ENCODE measurements at regions of chr22 and their contacts with region 1.

Region 1: GRCh38 chr22:20885557-20886323 is 26.9 kb downstream of the SNAP29 start:
- DNase-seq: peak; percentile 80 to 85
- H3K4me3 ChIP-seq: no peak overlapping the region
- H3K27ac ChIP-seq: 0 out of 2 replicates have a peak overlapping the region, but pooled peaks have one; percentile 42
- H3K4me1 ChIP-seq: peaks cover 28% of the 10 kb centered on the region
- H3K27me3 ChIP-seq: no peaks in the 10 kb centered on the region
- CTCF ChIP-seq: peak; percentile 82

Region 2: GRCh38 chr22:20803696-20804324 is 81.9 kb before region 1 on chr22:
- CTCF ChIA-PET with region 1: interaction called, 4 read pairs
- POLR2A ChIA-PET with region 1: no interaction called
- intact Hi-C with region 1: loop called (anchors 5 kb)
- DNase-seq: peak in 1 of 2 experiments; percentile 34
- H3K4me3 ChIP-seq: no peak overlapping the region
- H3K27ac ChIP-seq: no peak overlapping the region
- H3K4me1 ChIP-seq: peaks cover 34% of the 10 kb centered on the region
- H3K27me3 ChIP-seq: no peaks in the 10 kb centered on the region
- CTCF ChIP-seq: peak; percentile 67

Region 3: DNA sequence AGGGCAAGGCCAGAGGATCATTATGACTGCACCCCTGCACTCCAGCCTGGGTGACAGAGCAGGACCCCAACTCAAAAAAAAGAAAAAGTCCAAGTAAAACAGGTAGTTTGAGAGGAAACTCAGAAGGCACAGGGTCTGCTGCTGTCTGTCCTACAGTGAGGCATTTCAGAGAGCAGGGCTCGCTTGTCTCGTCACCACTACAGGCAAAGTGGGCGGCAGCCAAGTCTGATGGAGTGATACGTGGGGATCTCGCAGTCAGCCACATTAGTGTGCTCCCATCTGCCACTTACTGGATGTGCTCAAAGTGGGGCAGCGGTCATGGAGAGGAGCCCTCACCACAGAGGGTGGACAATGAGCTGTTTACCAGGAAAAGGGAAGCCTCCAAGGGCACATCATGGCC is 69.2 kb before region 1 on chr22:
- CTCF ChIA-PET with region 1: no interaction called
- POLR2A ChIA-PET with region 1: no interaction called
- intact Hi-C with region 1: no loop called
- DNase-seq: no peak
- H3K4me3 ChIP-seq: no peak overlapping the region
- H3K27ac ChIP-seq: no peak overlapping the region
- H3K4me1 ChIP-seq: no peaks in the 10 kb centered on the region
- H3K27me3 ChIP-seq: no peaks in the 10 kb centered on the region
- CTCF ChIP-seq: no peak

Region 4: DNA sequence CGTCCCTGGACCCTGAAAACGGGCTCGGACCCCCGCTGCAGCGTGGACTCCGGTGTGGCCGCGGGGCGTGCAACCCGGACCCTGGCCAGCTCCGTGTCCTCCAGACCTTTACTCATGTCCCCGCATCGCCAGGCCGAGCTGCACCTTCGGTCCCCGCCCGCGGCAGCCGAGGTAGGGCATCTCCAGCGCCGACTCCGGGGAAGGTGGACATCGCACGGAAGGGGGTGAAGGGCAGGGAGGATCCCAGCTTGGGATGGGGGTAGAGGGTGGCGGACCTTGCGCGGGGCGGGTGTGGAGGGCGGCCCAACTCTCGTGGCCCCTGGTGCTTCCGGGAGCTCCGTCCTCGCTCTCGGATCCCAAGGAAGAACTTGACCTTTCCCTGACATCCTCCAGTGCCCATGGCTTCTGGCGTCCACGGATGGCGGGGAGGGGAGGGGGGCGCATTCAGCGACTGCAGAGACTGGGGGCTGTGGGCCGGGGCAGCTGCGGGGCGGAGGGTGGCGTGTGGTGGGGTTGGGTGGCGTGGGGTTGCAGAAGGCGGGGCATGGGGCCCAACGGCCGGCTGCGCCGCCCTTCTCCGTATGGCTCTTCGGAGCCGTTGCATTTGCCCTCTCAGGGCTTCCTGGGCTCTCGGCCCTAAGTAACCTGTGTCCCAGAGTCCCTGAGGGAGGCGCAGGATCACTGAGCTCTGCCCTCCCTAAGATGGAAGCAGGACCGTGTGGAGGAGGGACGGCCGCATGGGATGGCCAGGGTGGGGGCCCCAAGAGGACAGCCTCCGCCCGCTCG is 71.8 kb after region 1 on chr22:
- CTCF ChIA-PET with region 1: interaction called, 4 read pairs
- POLR2A ChIA-PET with region 1: interaction called, 9 read pairs
- intact Hi-C with region 1: loop called (anchors 2 kb)
- DNase-seq: peak; percentile 49 to 57
- H3K4me3 ChIP-seq: peak overlapping the region; percentile 84
- H3K27ac ChIP-seq: peak overlapping the region; percentile 57; the same call in 1 of the 2 replicates
- H3K4me1 ChIP-seq: peaks cover 9% of the 10 kb centered on the region; the same call in 1 of the 2 replicates
- H3K27me3 ChIP-seq: no peaks in the 10 kb centered on the region
- CTCF ChIP-seq: no peak

Region 5: DNA sequence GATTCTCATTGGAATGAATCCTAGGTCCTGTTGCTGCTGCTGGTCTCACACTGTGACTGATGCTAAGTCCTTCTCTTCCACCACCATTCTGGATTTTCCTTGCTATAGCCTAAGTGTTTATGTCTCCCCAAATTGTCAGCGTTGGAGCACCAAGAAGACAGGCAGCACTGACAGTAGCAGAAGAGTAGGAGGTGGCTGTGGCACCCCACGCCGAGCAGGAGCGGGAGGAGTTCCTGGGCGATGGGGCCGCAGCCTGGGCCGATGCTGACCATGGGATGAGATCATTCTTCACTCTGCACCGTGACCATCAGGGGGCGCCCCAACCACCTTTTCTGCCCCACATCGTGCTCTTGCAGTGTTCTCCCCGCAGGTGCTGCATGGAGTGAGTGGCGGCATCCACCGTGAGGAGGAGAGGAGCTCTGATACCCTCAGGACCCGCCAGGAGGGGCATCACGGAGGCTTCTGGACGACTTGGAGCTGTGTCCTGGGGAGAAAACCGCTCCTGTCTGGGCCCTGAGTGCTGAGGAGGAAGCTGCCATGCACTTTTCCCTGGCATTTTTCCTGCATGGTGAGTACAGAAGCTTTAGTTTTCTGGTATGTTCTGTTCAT is 217.0 kb after region 1 on chr22:
- CTCF ChIA-PET with region 1: no interaction called
- POLR2A ChIA-PET with region 1: no interaction called
- intact Hi-C with region 1: loop called (anchors 10 kb)
- DNase-seq: peak; percentile 37 to 51
- H3K4me3 ChIP-seq: peak overlapping the region; percentile 33; the same call in 1 of the 2 replicates
- H3K27ac ChIP-seq: no peak overlapping the region
- H3K4me1 ChIP-seq: peaks cover 34% of the 10 kb centered on the region
- H3K27me3 ChIP-seq: no peaks in the 10 kb centered on the region
- CTCF ChIP-seq: peak; percentile 69

Measured in PC-9 (cell line).